Heart left ventricle (tissue), 16 donors: ENCODE measurements at regions of chrX and their contacts with region 1.

Region 1: GRCh38 chrX:45596188-45596808 is 395.6 kb upstream of the DIPK2B start:
- DNase-seq: no peak
- ATAC-seq: no peak
- H3K4me3 ChIP-seq: no peak overlapping the region
- H3K27ac ChIP-seq: no peak overlapping the region
- H3K4me1 ChIP-seq: no peaks in the 10 kb centered on the region
- H3K27me3 ChIP-seq: peaks cover 0 to 17% (median 0%) of the 10 kb centered on the region in 9 donors
- CTCF ChIP-seq: peak in 2 of 12 donors; percentile 13 to 23
- POLR2A ChIP-seq: no peak

Region 2: GRCh38 chrX:45632506-45632905 is 36.2 kb after region 1 on chrX:
- intact Hi-C with region 1: no loop called
- DNase-seq: peak in 1 of 5 donors; percentile 13
- ATAC-seq: no peak
- H3K4me3 ChIP-seq: no peak overlapping the region
- H3K27ac ChIP-seq: no peak overlapping the region
- H3K4me1 ChIP-seq: no peaks in the 10 kb centered on the region
- H3K27me3 ChIP-seq: peaks cover 0 to 32% (median 0%) of the 10 kb centered on the region in 9 donors
- CTCF ChIP-seq: peak in 1 of 12 donors; percentile 7
- POLR2A ChIP-seq: no peak

Region 3: DNA sequence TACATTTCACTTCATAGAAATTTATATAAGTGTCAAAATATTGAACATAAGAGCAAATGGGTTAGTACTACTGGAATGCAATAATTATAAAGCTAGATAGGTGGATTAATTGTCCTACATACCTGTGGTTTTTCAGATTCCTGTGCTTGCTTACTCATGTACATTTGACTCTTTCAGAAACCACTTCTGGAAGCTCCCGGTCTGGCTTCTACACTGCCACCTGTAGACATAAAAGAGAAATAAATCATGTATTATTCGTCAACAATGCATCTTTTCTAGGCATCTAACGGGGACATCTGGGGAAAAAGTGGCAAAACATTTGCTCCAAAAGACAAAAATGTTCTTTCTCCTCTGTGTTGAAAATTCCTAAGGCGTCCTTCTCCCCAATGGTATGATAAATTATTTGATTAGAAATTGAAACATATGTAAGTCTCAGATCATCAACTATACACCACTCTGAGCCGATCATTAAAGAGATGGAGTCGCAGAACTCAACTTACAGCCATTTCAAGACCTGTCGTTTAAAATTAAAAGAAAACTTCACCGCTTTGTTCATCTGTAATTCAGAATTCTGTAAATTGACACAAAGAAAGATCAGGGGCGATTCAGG is 253.1 kb after region 1 on chrX:
- intact Hi-C with region 1: loop called in 1 of 10 experiments (anchors 10 kb)
- DNase-seq: no peak
- ATAC-seq: no peak
- H3K4me3 ChIP-seq: peak overlapping the region in 8 of 12 donors; percentile 1 to 57 (median 15)
- H3K27ac ChIP-seq: no peak overlapping the region
- H3K4me1 ChIP-seq: peaks cover 0 to 6% (median 0%) of the 10 kb centered on the region in 12 donors
- H3K27me3 ChIP-seq: peaks cover 0 to 56% (median 0%) of the 10 kb centered on the region in 9 donors
- CTCF ChIP-seq: peak in 7 of 12 donors; percentile 18 to 45 (median 31)
- POLR2A ChIP-seq: no peak

Region 4: GRCh38 chrX:46152756-46153155 is 556.5 kb after region 1 on chrX:
- intact Hi-C with region 1: no loop called
- DNase-seq: no peak
- ATAC-seq: no peak
- H3K4me3 ChIP-seq: no peak overlapping the region
- H3K27ac ChIP-seq: no peak overlapping the region
- H3K4me1 ChIP-seq: no peaks in the 10 kb centered on the region
- H3K27me3 ChIP-seq: peaks cover 0 to 18% (median 0%) of the 10 kb centered on the region in 9 donors
- CTCF ChIP-seq: no peak
- POLR2A ChIP-seq: no peak